Gastrocnemius medialis (tissue), 4 donors: ENCODE measurements at regions of chr12 and their contacts with region 1.

Region 1: DNA sequence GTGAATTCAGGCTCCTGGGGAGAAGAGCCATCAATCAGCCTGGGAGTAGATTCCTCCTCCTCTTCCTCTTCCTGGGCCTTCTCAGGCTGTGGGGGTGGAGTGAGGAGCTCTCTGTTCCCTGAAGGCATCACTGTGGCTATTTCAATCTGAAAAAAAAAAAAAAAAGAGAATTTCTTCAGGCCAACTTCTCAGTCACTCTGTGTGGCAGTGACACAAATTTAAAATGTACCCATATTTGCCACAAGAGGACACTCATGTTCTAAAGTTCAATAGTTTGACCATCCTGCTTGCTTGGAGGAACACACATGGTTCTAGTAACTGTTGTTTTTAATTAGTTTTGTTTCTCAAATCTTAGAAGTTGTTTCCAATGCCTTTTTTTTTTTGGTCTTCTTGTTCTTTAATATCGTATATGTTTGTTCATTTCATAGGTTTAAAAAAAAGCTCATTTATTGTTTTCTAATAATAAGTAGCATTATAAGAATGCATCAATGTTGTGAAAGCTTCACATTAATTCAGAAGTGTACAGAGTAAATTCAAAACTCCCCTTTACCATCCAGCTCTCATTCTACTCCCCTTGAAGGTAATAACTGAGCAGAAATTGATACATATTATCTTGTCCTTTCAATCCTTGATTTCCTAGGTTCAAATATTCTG is 23.3 kb upstream of the CCER1 start:
- DNase-seq: no peak
- ATAC-seq: peak; percentile 53 to 83
- H3K4me3 ChIP-seq: no peak overlapping the region
- H3K27ac ChIP-seq: no peak overlapping the region
- H3K4me1 ChIP-seq: no peaks in the 10 kb centered on the region
- H3K27me3 ChIP-seq: no peaks in the 10 kb centered on the region
- CTCF ChIP-seq: peak in 4 of 5 experiments; percentile 21 to 52 (median 41)
- POLR2A ChIP-seq: no peak

Region 2: GRCh38 chr12:90174198-90174510 is 804.1 kb before region 1 on chr12:
- in situ Hi-C with region 1: no loop called
- intact Hi-C with region 1: no loop called
- DNase-seq: no peak
- ATAC-seq: no peak
- H3K4me3 ChIP-seq: no peak overlapping the region
- H3K27ac ChIP-seq: no peak overlapping the region
- H3K4me1 ChIP-seq: no peaks in the 10 kb centered on the region
- H3K27me3 ChIP-seq: no peaks in the 10 kb centered on the region
- CTCF ChIP-seq: no peak
- POLR2A ChIP-seq: no peak

Region 3: DNA sequence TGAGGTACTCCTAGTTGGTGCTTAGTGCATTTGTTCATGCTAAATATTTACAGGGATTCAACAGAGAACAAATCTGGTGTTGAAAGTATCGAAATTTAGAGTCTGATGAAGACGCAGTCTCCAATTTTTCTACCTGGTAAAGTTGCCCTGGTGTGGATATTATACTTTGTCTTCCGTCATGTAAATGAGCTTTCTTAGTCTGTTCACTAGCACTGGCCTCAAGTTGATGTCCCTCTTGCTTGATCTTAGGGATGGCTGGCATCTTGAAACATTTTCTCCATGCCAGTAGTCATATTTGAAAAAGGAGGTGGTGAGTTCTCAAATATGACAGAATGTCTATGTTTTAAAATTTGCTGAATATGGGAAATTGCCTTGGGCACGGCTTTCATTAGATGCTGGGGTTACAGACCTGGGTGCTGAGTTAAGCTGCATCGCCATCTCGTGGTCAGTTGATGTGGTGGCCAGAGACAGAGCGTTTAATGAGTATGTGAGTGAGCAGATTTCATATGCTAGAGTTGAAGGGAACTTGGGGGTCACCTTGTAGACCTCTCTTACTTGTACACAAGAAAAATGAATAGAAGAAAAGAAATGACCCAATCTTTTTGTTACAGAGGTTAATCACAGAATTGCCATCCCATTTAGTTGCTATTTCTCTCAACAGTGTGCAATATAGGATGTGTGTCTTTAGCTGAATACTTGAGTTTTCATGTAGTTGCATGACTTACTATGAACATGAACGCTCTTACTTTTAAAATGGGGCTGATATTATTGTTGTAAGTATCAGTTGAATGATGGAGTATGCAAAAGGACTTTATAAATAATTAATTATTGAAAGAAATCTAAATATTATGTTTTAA is 377.1 kb after region 1 on chr12:
- in situ Hi-C with region 1: loop called in 2 of 4 experiments (anchors 10 kb)
- intact Hi-C with region 1: loop called (anchors 5 kb)
- DNase-seq: peak; percentile 6 to 39
- ATAC-seq: peak; percentile 54 to 62
- H3K4me3 ChIP-seq: no peak overlapping the region
- H3K27ac ChIP-seq: no peak overlapping the region
- H3K4me1 ChIP-seq: no peaks in the 10 kb centered on the region
- H3K27me3 ChIP-seq: no peaks in the 10 kb centered on the region
- CTCF ChIP-seq: peak; percentile 37 to 72 (median 58)
- POLR2A ChIP-seq: no peak